Heart left ventricle (tissue), 16 donors: ENCODE measurements at regions of chr1 and their contacts with region 1.

Region 1: GRCh38 chr1:97238816-97239215 is 517.2 kb downstream of the PTBP2 start:
- DNase-seq: no peak
- ATAC-seq: no peak
- H3K4me3 ChIP-seq: no peak overlapping the region
- H3K27ac ChIP-seq: no peak overlapping the region
- H3K4me1 ChIP-seq: no peaks in the 10 kb centered on the region
- H3K27me3 ChIP-seq: no peaks in the 10 kb centered on the region
- CTCF ChIP-seq: no peak
- POLR2A ChIP-seq: no peak

Region 2: DNA sequence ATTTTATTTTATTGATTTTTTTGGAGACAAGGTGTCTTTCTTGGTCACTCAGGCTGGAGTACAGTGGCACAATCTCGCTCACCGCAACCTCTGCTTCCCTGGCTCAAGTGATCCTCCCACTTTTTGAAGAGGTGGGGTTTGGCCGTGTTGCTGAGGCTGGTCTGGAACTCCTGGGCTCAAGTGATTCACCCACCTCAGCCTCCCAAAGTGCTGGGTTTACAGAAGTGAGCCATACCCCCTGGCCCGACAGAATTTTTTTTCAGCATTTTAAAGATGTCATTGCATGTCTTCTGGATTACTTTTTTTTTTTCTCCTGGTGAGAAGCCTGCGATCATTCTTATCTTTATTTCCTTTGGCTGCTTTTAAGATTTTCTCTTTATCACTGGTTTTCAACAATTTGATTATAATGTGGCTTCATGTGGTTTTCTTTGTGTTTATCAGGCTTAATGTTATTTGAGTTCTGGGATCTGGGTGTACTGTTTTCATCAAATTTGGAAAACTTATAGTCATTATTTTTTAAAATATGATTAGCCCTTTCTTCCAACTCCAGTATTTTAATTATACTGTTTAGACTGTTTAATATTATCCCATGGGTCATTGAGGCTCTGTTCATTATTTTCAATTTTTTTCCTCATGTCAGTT is 540.4 kb before region 1 on chr1:
- intact Hi-C with region 1: loop called in 1 of 10 experiments (anchors 10 kb)
- DNase-seq: no peak
- ATAC-seq: no peak
- H3K4me3 ChIP-seq: no peak overlapping the region
- H3K27ac ChIP-seq: no peak overlapping the region
- H3K4me1 ChIP-seq: no peaks in the 10 kb centered on the region
- H3K27me3 ChIP-seq: no peaks in the 10 kb centered on the region
- CTCF ChIP-seq: no peak
- POLR2A ChIP-seq: no peak

Region 3: GRCh38 chr1:97186404-97186803 is 52.4 kb before region 1 on chr1:
- intact Hi-C with region 1: no loop called
- DNase-seq: no peak
- ATAC-seq: no peak
- H3K4me3 ChIP-seq: no peak overlapping the region
- H3K27ac ChIP-seq: no peak overlapping the region
- H3K4me1 ChIP-seq: no peaks in the 10 kb centered on the region
- H3K27me3 ChIP-seq: no peaks in the 10 kb centered on the region
- CTCF ChIP-seq: peak in 1 of 12 donors; percentile 8
- POLR2A ChIP-seq: no peak

Region 4: DNA sequence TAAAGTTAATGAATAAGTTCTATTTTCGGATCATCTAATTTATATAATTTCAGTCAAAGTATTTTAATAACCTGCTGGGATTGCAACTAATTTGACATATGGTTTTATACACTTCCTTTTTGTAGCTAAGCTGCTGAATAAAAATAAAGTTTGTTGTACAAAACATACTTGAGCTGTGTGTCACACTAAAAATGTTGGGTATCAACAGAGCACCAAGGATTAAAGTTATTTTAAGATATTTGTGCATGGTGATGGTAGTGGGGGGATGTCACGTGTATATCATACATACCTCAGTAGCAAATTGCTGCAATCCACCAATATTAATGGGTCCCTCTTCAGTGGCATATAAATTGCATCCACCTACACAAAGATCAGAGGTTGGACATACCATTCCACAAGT is 482.4 kb after region 1 on chr1:
- intact Hi-C with region 1: no loop called
- DNase-seq: no peak
- ATAC-seq: no peak
- H3K4me3 ChIP-seq: no peak overlapping the region
- H3K27ac ChIP-seq: no peak overlapping the region
- H3K4me1 ChIP-seq: no peaks in the 10 kb centered on the region
- H3K27me3 ChIP-seq: no peaks in the 10 kb centered on the region
- CTCF ChIP-seq: no peak
- POLR2A ChIP-seq: no peak